PC-3 (cell line): ENCODE measurements at regions of chr18 and their contacts with region 1.

Region 1: GRCh38 chr18:46469186-46469915 is 187.7 kb downstream of the LOXHD1 start:
- DNase-seq: peak; percentile 70
- ATAC-seq: peak; percentile 91
- H3K4me3 ChIP-seq: no peak overlapping the region
- H3K27ac ChIP-seq: peak overlapping the region; percentile 78
- H3K4me1 ChIP-seq: peaks cover 22% of the 10 kb centered on the region
- H3K27me3 ChIP-seq: no peaks in the 10 kb centered on the region
- CTCF ChIP-seq: no peak

Region 2: GRCh38 chr18:46324087-46324958 is 145.0 kb before region 1 on chr18:
- CTCF ChIA-PET with region 1: no interaction called
- POLR2A ChIA-PET with region 1: no interaction called
- intact Hi-C with region 1: loop called (anchors 5 kb)
- DNase-seq: peak; percentile 61
- ATAC-seq: peak; percentile 27
- H3K4me3 ChIP-seq: no peak overlapping the region
- H3K27ac ChIP-seq: peak overlapping the region; percentile 22; the same call in 1 of the 2 replicates
- H3K4me1 ChIP-seq: peaks cover 51% of the 10 kb centered on the region
- H3K27me3 ChIP-seq: no peaks in the 10 kb centered on the region
- CTCF ChIP-seq: no peak